ENCODE measurements at regions of chr22 and their contacts with region 1.

Region 1: DNA sequence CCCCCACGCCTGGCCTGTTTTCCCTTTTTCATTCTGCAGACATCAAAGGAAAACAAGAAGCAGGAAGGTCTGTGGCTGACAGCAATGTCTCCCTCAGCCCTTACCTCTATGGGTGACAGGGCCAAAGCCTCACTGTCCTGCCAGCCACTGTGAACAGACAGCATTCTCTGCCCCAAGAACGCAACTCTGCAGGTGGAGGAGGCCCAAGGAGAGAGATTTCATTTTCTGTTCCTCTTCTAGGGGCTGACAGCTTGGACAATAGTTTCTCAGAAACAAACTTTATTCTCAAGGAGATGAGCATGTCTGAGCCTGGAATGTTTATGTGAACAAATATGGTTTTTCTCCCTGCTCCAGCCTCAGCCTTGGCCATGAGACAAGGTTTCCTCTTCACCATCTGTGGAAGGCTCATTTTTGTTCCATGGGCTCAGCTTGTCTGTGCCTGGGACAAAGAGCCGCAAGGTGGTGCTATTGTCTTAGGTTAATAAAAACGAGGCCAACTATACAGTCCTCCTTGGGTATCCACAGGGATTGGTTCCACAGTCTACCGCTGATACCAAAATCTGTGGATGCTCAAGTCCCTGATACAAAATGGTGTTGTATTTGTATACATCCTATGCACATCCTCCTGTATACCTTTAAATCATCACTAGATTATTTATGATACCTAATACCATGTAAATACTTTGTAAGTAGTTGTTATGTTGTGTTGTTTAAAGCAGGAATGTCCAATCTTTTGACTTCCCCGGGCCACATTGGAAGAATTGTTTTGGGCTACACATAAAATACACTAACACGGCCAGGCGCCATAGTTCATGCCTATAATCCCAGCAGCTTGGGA is 5.8 kb downstream of the PIWIL3 start:
- DNase-seq: peak; percentile 55
- ATAC-seq: peak; percentile 95
- H3K4me3 ChIP-seq: no peak overlapping the region
- H3K27ac ChIP-seq: no peak overlapping the region
- H3K4me1 ChIP-seq: no peaks in the 10 kb centered on the region
- H3K27me3 ChIP-seq: peaks cover 0 to 21% of the 10 kb centered on the region in 2 experiments; a peak in 4 of 5 replicates
- CTCF ChIP-seq: peak; percentile 86
- EP300 ChIP-seq: no peak
- POLR2A ChIP-seq: no peak
- RAD21 ChIP-seq: peak; percentile 56

Region 2: DNA sequence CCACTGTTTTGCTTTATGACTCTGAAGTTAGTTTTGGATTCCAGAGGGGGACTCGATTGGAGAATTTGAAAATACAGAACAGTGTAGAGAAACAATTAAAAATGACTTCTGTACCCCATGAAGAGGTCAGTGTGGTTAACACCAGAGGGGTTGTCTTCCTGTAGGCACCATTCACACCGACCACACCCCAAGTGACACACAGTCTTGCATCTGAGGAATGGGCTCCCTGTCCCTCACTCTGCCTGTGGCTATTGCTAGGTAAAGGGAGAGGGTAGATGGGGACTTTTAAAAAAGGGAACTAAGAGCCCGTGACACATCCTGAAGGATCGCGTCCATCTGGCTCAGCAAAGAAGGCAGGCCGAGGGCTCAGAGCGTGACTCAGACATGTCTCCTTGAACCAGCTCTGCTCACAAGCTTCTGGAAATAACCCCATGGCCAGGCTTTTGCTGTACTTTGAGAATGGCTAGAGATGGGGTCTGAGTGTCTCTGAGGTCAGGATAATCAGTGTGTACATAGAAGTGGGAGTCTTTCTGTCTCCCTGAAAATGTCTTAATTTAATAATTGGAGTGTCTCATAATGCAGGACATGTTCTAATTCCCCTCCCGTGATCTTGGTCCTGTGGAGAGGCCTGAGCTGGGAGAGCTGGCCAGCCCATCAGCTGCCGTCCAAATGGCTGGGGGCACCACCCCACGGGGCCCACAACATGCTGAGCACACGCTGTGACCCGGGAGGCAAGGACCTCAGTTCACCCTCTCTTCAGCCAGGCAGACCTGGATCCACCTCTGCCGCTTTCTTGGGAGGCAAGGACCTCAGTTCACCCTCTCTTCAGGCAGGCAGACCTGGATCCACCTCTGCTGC is 76.5 kb after region 1 on chr22:
- CTCF ChIA-PET with region 1: interaction called, 34 read pairs
- POLR2A ChIA-PET with region 1: no interaction called
- in situ Hi-C with region 1: loop called (anchors 5 kb)
- intact Hi-C with region 1: loop called (anchors 2 kb)
- DNase-seq: no peak
- ATAC-seq: no peak
- H3K4me3 ChIP-seq: no peak overlapping the region
- H3K27ac ChIP-seq: no peak overlapping the region
- H3K4me1 ChIP-seq: no peaks in the 10 kb centered on the region
- H3K27me3 ChIP-seq: peaks cover 2 to 8% of the 10 kb centered on the region in 2 experiments; a peak in 2 of 5 replicates
- CTCF ChIP-seq: no peak
- EP300 ChIP-seq: no peak
- POLR2A ChIP-seq: no peak
- RAD21 ChIP-seq: no peak

Region 3: GRCh38 chr22:25048659-25049647 is 280.2 kb after region 1 on chr22:
- CTCF ChIA-PET with region 1: interaction called, 3 read pairs
- POLR2A ChIA-PET with region 1: no interaction called
- in situ Hi-C with region 1: loop called (anchors 25 kb)
- intact Hi-C with region 1: no loop called
- DNase-seq: peak; percentile 62
- ATAC-seq: peak; percentile 89
- H3K4me3 ChIP-seq: no peak overlapping the region
- H3K27ac ChIP-seq: no peak overlapping the region
- H3K4me1 ChIP-seq: peaks cover 27% of the 10 kb centered on the region
- H3K27me3 ChIP-seq: no peaks in the 10 kb centered on the region
- CTCF ChIP-seq: peak; percentile 92
- EP300 ChIP-seq: no peak
- POLR2A ChIP-seq: no peak
- RAD21 ChIP-seq: peak; percentile 84

Region 4: GRCh38 chr22:25057013-25057881 is 288.5 kb after region 1 on chr22:
- CTCF ChIA-PET with region 1: no interaction called
- POLR2A ChIA-PET with region 1: no interaction called
- in situ Hi-C with region 1: no loop called
- intact Hi-C with region 1: loop called (anchors 5 kb)
- DNase-seq: peak; percentile 44
- ATAC-seq: peak; percentile 95
- H3K4me3 ChIP-seq: no peak overlapping the region
- H3K27ac ChIP-seq: no peak overlapping the region
- H3K4me1 ChIP-seq: peaks cover 27% of the 10 kb centered on the region
- H3K27me3 ChIP-seq: no peaks in the 10 kb centered on the region
- CTCF ChIP-seq: peak; percentile 80
- EP300 ChIP-seq: no peak
- POLR2A ChIP-seq: no peak
- RAD21 ChIP-seq: peak; percentile 64